HCT116 (cell line): ENCODE measurements at regions of chr15 and their contacts with region 1.

Region 1: GRCh38 chr15:77496710-77497103 is 76.0 kb downstream of the HMG20A start:
- DNase-seq: peak; percentile 26
- ATAC-seq: peak; percentile 98
- H3K4me3 ChIP-seq: no peak overlapping the region
- H3K27ac ChIP-seq: no peak overlapping the region
- H3K4me1 ChIP-seq: peaks cover 0 to 6% of the 10 kb centered on the region in 2 experiments; a peak in 3 of 4 replicates
- H3K27me3 ChIP-seq: no peaks in the 10 kb centered on the region
- CTCF ChIP-seq: peak; percentile 76 to 96 (median 92)
- POLR2A ChIP-seq: no peak
- RAD21 ChIP-seq: peak; percentile 91

Region 2: GRCh38 chr15:76939715-76940114 is 557.0 kb before region 1 on chr15:
- CTCF ChIA-PET with region 1: no interaction called
- POLR2A ChIA-PET with region 1: no interaction called
- RAD21 ChIA-PET with region 1: no interaction called
- intact Hi-C with region 1: loop called (anchors 10 kb)
- DNase-seq: no peak
- ATAC-seq: no peak
- H3K4me3 ChIP-seq: no peak overlapping the region
- H3K27ac ChIP-seq: no peak overlapping the region
- H3K4me1 ChIP-seq: no peaks in the 10 kb centered on the region
- H3K27me3 ChIP-seq: no peaks in the 10 kb centered on the region
- CTCF ChIP-seq: no peak
- POLR2A ChIP-seq: no peak
- RAD21 ChIP-seq: no peak

Region 3: DNA sequence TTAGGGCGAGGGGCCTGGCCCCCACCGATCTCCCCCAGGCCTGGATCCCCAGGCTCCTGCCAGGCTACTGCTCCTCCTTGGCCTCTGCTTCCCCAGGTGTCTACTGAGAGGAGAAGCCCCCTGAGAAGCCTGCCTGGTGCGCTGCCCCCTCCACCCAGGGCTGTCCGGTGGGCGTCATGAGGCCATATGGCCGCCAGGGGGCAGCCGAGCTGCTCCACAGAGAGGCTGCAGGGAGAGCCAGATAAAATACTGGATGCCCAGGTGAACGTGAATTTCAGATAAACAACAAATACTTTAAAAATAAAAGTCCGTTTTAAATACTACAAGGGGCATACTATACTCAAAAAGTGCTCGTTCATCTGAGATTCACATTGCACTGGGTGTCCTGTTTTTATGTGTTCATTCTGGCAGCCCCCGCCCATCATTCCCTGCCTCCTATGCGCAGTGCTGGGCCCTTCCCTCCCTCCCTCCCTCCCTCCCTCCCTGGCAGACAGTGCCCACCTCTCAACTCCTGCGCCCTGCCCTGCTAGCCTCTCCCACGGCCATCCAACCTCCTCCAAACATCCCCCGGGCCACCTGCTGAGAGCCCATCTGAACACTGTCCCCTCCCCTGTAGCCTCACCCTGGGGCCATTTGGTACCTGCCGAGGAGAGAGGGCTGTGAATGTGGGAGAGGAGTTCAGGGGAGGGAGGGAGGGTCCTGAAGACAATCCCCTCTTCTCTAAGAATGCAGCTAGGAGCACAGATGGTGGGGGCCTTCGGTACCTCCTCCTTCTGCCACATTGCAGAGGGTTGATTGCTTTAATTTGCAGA is 472.2 kb before region 1 on chr15:
- CTCF ChIA-PET with region 1: no interaction called
- POLR2A ChIA-PET with region 1: no interaction called
- RAD21 ChIA-PET with region 1: no interaction called
- intact Hi-C with region 1: loop called (anchors 2 kb)
- DNase-seq: no peak
- ATAC-seq: peak; percentile 87
- H3K4me3 ChIP-seq: no peak overlapping the region
- H3K27ac ChIP-seq: no peak overlapping the region
- H3K4me1 ChIP-seq: peaks cover 0 to 2% of the 10 kb centered on the region in 2 experiments; a peak in 1 of 4 replicates
- H3K27me3 ChIP-seq: no peaks in the 10 kb centered on the region
- CTCF ChIP-seq: peak; percentile 65 to 98 (median 94); a peak in 5 of 6 replicates
- POLR2A ChIP-seq: no peak
- RAD21 ChIP-seq: peak; percentile 75

Region 4: GRCh38 chr15:77107531-77108355 is 389.0 kb before region 1 on chr15:
- CTCF ChIA-PET with region 1: interaction called, 5 read pairs
- POLR2A ChIA-PET with region 1: no interaction called
- RAD21 ChIA-PET with region 1: interaction called in 1 of 2 experiments, 3 read pairs
- intact Hi-C with region 1: loop called (anchors 2 kb)
- DNase-seq: no peak
- ATAC-seq: peak; percentile 95
- H3K4me3 ChIP-seq: no peak overlapping the region
- H3K27ac ChIP-seq: no peak overlapping the region
- H3K4me1 ChIP-seq: no peaks in the 10 kb centered on the region; a peak in 1 of 4 replicates
- H3K27me3 ChIP-seq: no peaks in the 10 kb centered on the region
- CTCF ChIP-seq: peak; percentile 66 to 80 (median 75); a peak in 5 of 6 replicates
- POLR2A ChIP-seq: no peak
- RAD21 ChIP-seq: peak; percentile 77

Region 5: GRCh38 chr15:77118882-77119321 is 377.8 kb before region 1 on chr15:
- CTCF ChIA-PET with region 1: interaction called, 18 read pairs
- POLR2A ChIA-PET with region 1: no interaction called
- RAD21 ChIA-PET with region 1: interaction called in 1 of 2 experiments, 5 read pairs
- intact Hi-C with region 1: loop called (anchors 1 kb)
- DNase-seq: peak; percentile 36
- ATAC-seq: peak; percentile 83
- H3K4me3 ChIP-seq: no peak overlapping the region
- H3K27ac ChIP-seq: no peak overlapping the region
- H3K4me1 ChIP-seq: 0 out of 4 replicates have a peak, but pooled peaks cover 0 to 3% of the 10 kb centered on the region in 2 experiments
- H3K27me3 ChIP-seq: no peaks in the 10 kb centered on the region
- CTCF ChIP-seq: peak; percentile 72 to 77 (median 75)
- POLR2A ChIP-seq: no peak
- RAD21 ChIP-seq: peak; percentile 81

Region 6: GRCh38 chr15:77186594-77187011 is 310.1 kb before region 1 on chr15:
- CTCF ChIA-PET with region 1: interaction called, 44 read pairs
- POLR2A ChIA-PET with region 1: no interaction called
- RAD21 ChIA-PET with region 1: interaction called in 1 of 2 experiments, 5 read pairs
- intact Hi-C with region 1: loop called (anchors 1 kb)
- DNase-seq: peak; percentile 10
- ATAC-seq: 0 out of 2 replicates have a peak, but pooled peaks have one; percentile 30
- H3K4me3 ChIP-seq: no peak overlapping the region
- H3K27ac ChIP-seq: no peak overlapping the region
- H3K4me1 ChIP-seq: no peaks in the 10 kb centered on the region
- H3K27me3 ChIP-seq: no peaks in the 10 kb centered on the region
- CTCF ChIP-seq: peak; percentile 44 to 64 (median 47); a peak in 4 of 6 replicates
- POLR2A ChIP-seq: no peak
- RAD21 ChIP-seq: peak; percentile 75

Region 7: DNA sequence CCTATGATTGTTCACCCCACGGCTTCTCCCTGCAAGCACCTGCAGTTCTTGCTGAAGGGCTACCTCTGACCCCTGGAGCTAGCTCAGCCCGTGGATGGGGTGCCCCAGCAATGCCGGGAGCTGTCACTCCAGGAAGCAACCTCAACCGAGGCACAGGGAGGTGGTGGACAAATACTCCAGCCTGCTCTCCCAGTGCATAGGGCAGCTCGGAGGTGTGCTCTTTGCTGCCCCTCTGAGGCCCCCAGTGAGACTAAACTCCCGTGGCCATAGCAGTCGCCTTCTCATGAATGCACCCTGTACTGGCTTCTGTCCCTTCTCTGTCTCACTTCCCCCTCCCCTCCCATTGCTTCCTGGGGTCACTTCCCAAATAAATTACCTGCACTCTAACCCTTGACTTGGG is 87.5 kb after region 1 on chr15:
- CTCF ChIA-PET with region 1: no interaction called
- POLR2A ChIA-PET with region 1: no interaction called
- RAD21 ChIA-PET with region 1: no interaction called
- intact Hi-C with region 1: no loop called
- DNase-seq: no peak
- ATAC-seq: peak; percentile 94
- H3K4me3 ChIP-seq: no peak overlapping the region
- H3K27ac ChIP-seq: no peak overlapping the region
- H3K4me1 ChIP-seq: no peaks in the 10 kb centered on the region
- H3K27me3 ChIP-seq: no peaks in the 10 kb centered on the region
- CTCF ChIP-seq: peak in 2 of 3 experiments; percentile 32 to 41; a peak in 4 of 6 replicates
- POLR2A ChIP-seq: no peak
- RAD21 ChIP-seq: peak; percentile 13; the same call in 1 of the 2 replicates